Activated CD4-positive, alpha-beta T cell treated with anti-CD3 and anti-CD28 coated beads, Interleukin-2, amount 10 ng/mL, durations not matched to agents 24 days and 14 days (primary cell): ENCODE measurements at regions of chr12 and their contacts with region 1.

Region 1: DNA sequence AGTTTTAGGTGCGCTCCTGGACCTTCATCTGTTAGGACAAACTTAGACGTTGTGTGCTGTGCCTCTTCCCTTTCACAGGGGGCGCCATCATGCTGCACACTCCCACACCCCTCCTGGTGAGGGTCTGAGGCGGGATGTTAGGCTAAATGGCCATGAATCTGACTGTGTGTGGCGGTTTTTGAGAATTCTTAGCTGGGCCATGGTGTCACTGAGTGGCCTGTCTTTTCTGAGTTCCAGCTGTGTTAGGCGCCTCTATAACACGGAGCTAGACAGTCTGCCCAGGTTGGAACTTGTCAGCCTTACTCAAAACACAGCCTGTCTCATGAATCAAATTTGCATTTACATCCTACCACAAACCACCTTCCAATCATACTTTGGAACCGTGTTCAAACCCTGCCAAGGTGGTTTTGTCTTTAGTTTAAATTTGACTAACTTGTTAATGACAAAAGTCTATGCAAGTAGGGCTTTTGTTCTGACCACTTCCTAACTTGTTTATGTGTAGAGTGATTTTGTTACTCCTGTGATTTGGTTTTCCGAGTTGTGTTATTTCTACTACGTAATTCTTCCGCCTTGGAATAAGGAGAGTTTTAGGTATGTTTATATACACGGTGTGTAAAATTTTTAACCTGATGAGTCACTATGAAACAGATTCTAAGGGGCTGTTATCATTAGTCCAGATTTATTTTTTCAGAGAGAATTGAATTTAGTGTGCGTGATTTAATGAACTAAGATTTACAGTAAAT is 19.6 kb downstream of the ACVR1B start:
- DNase-seq: peak; percentile 85
- H3K4me3 Mint-ChIP-seq: peak overlapping the region; percentile 71
- H3K27ac Mint-ChIP-seq: peak overlapping the region; percentile 59
- H3K4me1 Mint-ChIP-seq: peaks cover 54% of the 10 kb centered on the region
- H3K27me3 Mint-ChIP-seq: peaks cover 23% of the 10 kb centered on the region

Region 2: DNA sequence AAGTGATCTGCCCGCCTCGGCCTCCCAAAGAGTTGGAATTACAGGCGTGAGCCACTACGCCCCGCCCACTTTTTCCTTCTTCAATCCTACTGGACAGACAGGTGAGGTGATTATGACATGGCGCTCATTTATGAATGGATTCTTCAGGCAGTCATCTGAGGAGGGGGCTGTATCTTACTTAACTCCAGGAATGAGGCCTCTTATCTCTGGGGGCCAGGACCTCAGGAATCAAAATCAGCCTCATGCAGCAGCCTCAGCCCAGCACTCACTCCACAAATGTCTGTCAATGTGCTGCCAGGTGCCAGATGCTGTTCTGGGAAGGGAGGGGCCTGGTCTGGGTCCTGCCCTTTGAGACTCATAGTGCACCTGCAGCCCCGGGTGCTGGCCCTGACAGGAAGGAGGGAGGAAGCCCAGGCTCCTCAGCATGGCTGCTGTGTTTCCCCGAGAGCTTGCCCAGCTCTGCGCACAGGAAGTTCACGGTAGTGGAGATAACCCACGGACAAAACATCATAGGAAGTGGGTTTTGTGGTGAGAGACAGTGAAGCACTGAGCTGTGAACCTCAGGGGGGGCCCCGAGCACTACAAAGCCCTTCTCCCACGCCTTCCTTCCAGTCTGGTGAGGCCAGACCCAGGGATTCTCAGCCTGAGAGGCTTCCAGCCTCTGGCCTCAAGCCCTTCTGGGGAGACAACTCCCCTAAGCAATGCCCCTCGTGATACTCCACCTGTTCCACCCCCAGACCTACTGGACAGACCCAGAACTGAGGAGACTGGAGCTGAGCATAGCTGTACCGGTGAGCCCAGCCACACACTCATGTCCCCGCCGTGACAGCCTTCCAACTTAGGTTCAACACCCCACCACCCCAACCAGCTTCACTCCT is 602.2 kb before region 1 on chr12:
- intact Hi-C with region 1: loop called (anchors 1 kb)
- DNase-seq: peak; percentile 96
- H3K4me3 Mint-ChIP-seq: peak overlapping the region; percentile 66
- H3K27ac Mint-ChIP-seq: peak overlapping the region; percentile 82
- H3K4me1 Mint-ChIP-seq: peaks cover 48% of the 10 kb centered on the region
- H3K27me3 Mint-ChIP-seq: no peaks in the 10 kb centered on the region

Region 3: DNA sequence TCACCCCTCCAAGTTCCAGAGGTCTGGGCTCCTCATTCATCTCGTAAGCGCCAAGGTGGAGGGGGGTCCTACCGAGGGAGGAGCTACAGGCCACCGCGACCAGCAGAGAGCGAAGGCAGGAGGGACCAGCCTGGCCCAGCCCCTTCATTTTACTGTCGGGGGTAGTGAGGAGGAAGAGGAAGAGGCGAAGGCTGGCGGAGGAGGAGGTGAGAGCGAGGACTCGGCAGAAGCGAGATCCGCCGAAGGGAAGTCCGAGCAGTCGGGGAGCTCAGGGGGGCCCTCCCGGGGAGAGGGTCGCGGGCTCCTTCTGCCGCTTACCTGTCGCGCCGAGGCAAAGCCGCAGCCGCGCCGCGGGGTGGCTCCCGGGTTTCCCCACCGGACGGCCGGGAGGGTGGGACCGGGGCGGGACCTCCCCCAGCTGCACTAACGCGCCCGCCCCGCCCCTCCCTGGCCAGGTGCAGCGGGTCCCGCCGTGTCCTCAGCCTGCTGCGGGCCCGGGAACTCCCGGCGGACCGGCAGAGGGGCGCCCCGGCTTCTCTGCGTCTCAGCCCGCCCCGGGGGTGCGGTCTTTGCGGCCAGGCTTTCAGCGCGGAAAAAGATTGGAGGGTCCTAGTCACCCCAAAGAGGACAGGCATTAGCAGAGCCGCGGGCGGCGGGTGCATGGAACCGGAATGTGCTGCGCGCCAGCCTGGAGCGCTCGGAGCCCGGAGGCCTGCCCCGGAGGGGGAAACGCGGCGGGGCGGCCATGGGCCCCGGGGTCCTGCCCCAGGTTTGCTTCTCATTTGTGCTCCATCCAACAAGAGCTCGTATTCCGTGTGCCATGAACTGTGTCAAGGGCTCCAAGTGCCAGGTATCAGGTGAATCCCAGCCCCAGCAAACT is 579.6 kb before region 1 on chr12 and contains the start of gene GALNT6:
- intact Hi-C with region 1: loop called (anchors 10 kb)
- DNase-seq: peak; percentile 91
- H3K4me3 Mint-ChIP-seq: peak within 1 kb of the TSS; percentile 92
- H3K27ac Mint-ChIP-seq: peak within 1 kb of the TSS; percentile 87
- H3K4me1 Mint-ChIP-seq: peaks cover 66% of the 10 kb centered on the region
- H3K27me3 Mint-ChIP-seq: no peaks in the 10 kb centered on the region
- total RNA-seq, gene GALNT6: 10.7 and 12.8 TPM in 2 replicates

Region 4: GRCh38 chr12:51823875-51824565 is 147.1 kb before region 1 on chr12:
- intact Hi-C with region 1: loop called (anchors 5 kb)
- DNase-seq: peak; percentile 72
- H3K4me3 Mint-ChIP-seq: no peak overlapping the region
- H3K27ac Mint-ChIP-seq: no peak overlapping the region
- H3K4me1 Mint-ChIP-seq: peaks cover 26% of the 10 kb centered on the region
- H3K27me3 Mint-ChIP-seq: peaks cover 10% of the 10 kb centered on the region

Region 5: DNA sequence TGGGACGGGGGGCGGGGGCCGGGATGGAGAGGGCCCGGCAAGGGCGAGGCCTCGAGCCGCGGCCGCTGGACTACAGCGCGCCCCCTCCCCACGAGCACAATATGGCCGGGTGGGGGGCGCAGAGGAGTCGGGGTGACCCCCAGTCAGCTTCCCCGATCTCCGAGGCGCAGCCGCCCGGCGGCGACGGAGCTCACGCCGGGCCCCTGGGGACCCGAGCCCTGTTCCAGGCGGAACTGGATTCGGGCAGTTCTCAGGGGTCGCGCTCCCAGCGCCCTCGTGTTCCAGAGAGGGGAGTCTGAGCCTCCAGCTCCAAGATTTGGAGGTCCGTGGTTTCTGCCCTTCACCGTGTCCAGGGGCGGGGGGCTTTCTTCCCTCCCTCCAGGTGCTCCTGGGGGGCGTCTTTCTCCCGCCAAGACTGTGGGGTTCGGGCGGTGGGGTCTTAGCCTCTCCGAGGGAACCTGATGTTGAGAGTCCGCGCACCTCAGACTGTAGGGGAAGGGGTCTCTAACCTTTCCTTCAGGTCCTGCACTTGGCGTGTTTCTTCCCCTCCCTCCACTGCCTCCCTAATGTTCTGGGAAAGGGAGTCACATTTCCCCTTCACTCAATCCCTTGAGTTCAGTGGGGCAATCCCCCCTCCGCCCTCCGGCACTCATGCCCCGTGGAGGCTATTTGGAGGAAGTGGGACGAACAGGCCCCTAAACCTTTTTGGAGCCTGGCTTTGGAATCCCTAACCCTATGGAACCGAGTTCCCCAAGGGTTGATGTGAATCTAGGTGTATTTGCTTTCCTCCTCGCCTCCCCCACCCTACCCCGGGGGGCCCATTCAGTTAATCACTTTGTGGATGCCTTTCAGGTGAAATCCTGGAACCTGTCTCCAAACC is 19.0 kb before region 1 on chr12:
- intact Hi-C with region 1: loop called (anchors 1 kb)
- DNase-seq: peak; percentile 65
- H3K4me3 Mint-ChIP-seq: peak overlapping the region; percentile 74
- H3K27ac Mint-ChIP-seq: peak overlapping the region; percentile 10
- H3K4me1 Mint-ChIP-seq: peaks cover 26% of the 10 kb centered on the region
- H3K27me3 Mint-ChIP-seq: peaks cover 44% of the 10 kb centered on the region

Region 6: DNA sequence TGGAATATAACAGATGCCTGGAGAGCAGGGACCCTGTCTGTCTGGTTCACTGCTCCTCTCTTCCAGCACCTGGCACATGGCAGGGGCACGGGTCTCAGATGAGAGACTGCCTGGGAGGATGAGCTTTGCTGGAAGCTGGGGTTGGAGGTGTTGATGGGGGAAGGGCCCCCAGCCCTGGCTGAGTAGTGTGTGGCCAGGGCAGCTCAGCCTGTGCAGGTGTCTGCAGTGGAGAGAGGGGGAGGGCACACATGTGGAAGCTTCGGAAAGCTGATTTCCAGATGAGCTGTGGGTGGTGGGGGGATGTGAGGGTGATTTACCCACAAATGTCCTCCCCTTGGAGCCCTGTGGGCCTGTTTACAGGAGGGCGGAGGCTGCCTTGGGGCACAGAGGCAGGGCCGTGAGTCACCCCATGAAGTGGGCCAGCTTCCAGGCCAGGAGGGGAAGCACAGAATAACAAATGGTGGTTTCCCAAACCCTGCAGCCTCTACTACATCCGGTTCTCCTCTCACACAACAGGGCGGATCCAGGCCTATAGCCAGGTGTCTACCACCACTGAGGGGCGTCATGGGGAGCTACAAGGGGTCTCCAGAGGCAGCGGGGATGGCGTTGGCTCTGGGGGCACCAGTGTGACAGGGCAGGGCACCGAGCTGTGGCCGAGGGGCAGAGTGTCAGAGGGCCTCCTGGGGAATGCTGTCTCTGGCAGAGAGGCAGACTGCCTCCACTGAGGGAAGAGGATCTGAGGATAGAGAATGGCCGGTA is 273.0 kb after region 1 on chr12:
- intact Hi-C with region 1: loop called (anchors 10 kb)
- DNase-seq: peak; percentile 92
- H3K4me3 Mint-ChIP-seq: peak overlapping the region; percentile 91
- H3K27ac Mint-ChIP-seq: peak overlapping the region; percentile 99
- H3K4me1 Mint-ChIP-seq: peaks cover 63% of the 10 kb centered on the region
- H3K27me3 Mint-ChIP-seq: peaks cover 1% of the 10 kb centered on the region